Posterior cingulate gyrus (tissue), 11 donors: ENCODE measurements at regions of chr5 and their contacts with region 1.

Region 1: DNA sequence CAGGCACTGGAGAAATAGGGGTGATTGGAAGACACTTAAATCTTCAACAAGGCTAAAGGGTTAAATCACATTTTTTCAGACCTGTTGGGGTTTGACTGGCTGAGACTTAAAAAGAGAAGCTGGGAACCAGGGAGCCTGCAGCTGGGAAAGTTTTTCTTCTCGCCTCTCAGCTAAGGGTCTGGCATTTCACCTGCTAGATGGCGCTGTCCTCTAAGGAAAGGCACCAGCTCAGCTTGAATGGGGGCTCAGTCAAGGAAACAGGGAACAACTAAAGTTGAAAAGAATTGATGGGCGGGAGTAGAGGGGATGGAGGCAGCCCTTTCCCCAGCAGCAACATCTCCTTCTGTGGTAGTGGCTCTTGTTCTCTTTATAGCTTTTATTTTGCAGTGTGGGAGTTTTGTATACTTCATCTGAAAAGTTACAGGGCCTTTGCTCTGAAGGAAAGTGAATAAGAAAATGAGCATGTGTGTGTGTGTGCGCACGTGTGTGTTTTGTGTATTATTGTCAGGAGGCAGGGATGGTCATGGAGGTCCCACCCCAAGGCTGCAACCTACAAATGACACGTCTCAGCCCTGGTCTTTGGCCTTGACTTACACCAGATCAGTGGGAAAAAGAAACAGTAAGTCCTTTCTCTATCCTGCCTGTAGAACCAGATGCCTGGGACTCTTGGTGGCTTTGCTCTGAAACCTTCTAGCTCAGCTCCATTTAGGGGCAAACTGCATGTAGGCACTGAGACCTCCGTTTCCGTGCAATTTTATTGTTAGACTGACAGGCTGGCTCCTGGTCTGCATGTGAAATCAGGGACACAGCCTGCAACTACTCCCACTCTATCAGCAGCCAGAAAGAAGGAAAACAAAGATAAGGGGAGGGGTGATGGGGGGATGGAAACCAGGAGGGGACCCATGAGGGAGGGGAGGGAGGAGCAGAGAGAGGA is 316.2 kb upstream of the CLINT1 start:
- DNase-seq: peak in 8 of 10 donors; percentile 32 to 93 (median 70)

Region 2: GRCh38 chr5:157912621-157913325 is 262.4 kb before region 1 on chr5:
- intact Hi-C with region 1: no loop called
- DNase-seq: no peak

Region 3: GRCh38 chr5:158660726-158661125 is 485.5 kb after region 1 on chr5:
- intact Hi-C with region 1: no loop called
- DNase-seq: no peak

Region 4: GRCh38 chr5:158695595-158696330 is 520.6 kb after region 1 on chr5:
- intact Hi-C with region 1: loop called (anchors 10 kb)
- DNase-seq: peak; percentile 38 to 96 (median 80)

Region 5: DNA sequence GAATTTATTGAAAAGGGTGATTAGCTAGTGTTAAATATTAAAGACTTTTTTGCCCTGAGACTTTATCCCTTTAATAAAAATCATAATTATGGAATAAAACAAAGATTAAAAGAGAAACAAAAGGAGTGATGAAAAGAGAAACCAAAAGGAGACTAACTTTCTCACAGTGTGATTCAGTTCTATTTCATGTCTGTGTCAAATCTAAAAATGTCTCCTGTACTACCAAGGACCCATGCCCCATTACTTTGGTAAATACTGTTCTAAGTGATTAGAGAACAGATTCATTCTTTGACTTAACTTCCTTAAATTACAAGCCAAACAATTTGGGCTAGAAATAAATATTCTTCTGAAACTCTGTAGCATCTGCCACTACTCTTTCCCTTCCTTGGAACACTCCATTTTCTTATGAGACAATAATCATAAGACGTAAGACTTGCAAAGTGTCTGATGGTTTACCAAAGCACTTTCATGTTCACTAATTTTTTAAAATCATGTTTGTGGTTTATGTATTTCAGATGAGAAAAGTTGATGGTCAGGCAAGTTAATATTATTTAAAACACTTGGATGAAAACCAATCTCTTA is 605.6 kb after region 1 on chr5:
- intact Hi-C with region 1: no loop called
- DNase-seq: no peak